Activated T-helper 2 cell treated with anti-CD3 and anti-CD28 coated beads, Interferon-gamma antibody, Interleukin-2, Interleukin-4, amounts not matched to agents 10 μg/mL and 5 μg/mL and 100 μg/mL, durations not matched to agents 14 hours and 24 hours and 36 hours (primary cell): ENCODE measurements at regions of chr2 and their contacts with region 1.

Region 1: GRCh38 chr2:178914259-178914849 is 107.1 kb upstream of the TTN start:
- DNase-seq: peak; percentile 61
- H3K4me3 Mint-ChIP-seq: no peak overlapping the region
- H3K27ac Mint-ChIP-seq: no peak overlapping the region
- H3K4me1 Mint-ChIP-seq: peaks cover 16% of the 10 kb centered on the region
- H3K27me3 Mint-ChIP-seq: no peaks in the 10 kb centered on the region

Region 2: GRCh38 chr2:178761759-178762371 is 152.5 kb before region 1 on chr2:
- intact Hi-C with region 1: loop called (anchors 1 kb)
- DNase-seq: no peak
- H3K4me3 Mint-ChIP-seq: no peak overlapping the region
- H3K27ac Mint-ChIP-seq: no peak overlapping the region
- H3K4me1 Mint-ChIP-seq: peaks cover 12% of the 10 kb centered on the region
- H3K27me3 Mint-ChIP-seq: no peaks in the 10 kb centered on the region

Region 3: DNA sequence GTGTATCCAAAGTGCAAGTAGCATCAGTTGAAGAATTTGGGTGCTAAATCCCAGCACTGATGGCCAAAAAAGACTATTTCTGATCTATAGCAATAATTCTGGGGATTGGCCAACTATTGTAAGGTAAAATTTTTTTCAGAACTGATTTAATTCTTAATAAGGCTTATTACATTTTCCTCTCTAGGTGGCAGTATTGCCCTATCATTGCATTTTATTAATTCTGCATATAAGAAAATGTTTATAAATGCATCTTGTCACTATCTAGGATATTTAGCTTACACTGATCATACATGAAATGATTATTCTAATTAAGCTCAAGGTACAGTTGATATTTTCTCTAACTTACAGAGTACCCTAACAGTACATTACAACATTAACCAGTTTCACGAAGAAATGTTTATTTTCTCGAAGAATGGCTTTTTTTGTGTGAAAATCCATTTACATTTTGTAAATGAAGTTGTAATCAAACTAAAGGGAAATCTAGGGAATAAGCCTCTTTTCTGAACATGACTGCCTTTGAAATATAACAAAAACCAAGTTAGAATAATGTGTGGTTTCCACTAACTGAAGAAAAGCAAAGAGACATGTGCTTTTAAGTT is 118.2 kb before region 1 on chr2:
- intact Hi-C with region 1: loop called (anchors 1 kb)
- DNase-seq: no peak
- H3K4me3 Mint-ChIP-seq: no peak overlapping the region
- H3K27ac Mint-ChIP-seq: no peak overlapping the region
- H3K4me1 Mint-ChIP-seq: peaks cover 6% of the 10 kb centered on the region
- H3K27me3 Mint-ChIP-seq: peaks cover 2% of the 10 kb centered on the region

Region 4: GRCh38 chr2:178870703-178871102 is 43.7 kb before region 1 on chr2:
- intact Hi-C with region 1: loop called (anchors 1 kb)
- DNase-seq: no peak
- H3K4me3 Mint-ChIP-seq: no peak overlapping the region
- H3K27ac Mint-ChIP-seq: no peak overlapping the region
- H3K4me1 Mint-ChIP-seq: peaks cover 22% of the 10 kb centered on the region
- H3K27me3 Mint-ChIP-seq: no peaks in the 10 kb centered on the region

Region 5: GRCh38 chr2:178891265-178891958 is 22.9 kb before region 1 on chr2:
- intact Hi-C with region 1: loop called (anchors 2 kb)
- DNase-seq: peak; percentile 38
- H3K4me3 Mint-ChIP-seq: no peak overlapping the region
- H3K27ac Mint-ChIP-seq: no peak overlapping the region
- H3K4me1 Mint-ChIP-seq: peaks cover 9% of the 10 kb centered on the region
- H3K27me3 Mint-ChIP-seq: no peaks in the 10 kb centered on the region